ENCODE measurements at regions of chr3 and their contacts with region 1.

Region 1: GRCh38 chr3:157067114-157067513 is 92.8 kb downstream of the CCNL1 start:
- DNase-seq: peak in 2 of 3 donors; percentile 37 to 62
- H3K4me3 ChIP-seq: no peak overlapping the region
- H3K27ac ChIP-seq: no peak overlapping the region
- H3K4me1 ChIP-seq: peaks cover 0 to 2% (median 0%) of the 10 kb centered on the region in 4 experiments
- H3K27me3 ChIP-seq: no peaks in the 10 kb centered on the region

Region 2: DNA sequence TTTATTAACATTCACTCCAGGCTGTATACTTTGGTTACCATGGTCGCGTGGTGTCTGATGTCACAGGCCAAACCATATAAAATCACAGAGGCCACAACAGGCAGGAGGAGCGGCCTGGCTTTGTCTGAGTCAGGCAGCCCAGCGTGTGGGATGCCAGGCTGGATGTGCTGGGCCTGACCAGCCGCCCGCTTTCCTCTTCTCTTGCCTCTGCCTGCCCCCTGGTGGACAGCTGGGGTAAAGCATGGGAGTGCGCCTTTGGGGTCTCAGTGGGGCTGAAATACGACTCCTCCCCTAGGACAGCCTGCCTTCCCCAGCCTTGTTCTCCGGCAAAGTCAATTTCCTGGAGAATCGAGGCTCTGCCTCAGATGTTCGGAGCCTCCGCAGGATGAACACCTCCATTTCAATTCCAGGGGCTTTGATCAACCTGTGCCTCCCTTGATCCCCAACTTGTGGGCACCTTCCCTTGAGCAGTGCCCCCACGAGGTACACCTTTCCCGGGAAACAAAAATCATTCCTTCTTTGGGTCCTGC is 14.6 kb after region 1 on chr3:
- CTCF ChIA-PET with region 1: interaction called, 15 read pairs
- POLR2A ChIA-PET with region 1: no interaction called
- DNase-seq: peak; percentile 77 to 87 (median 85)
- H3K4me3 ChIP-seq: peak overlapping the region in 1 of 7 experiments; percentile 8
- H3K27ac ChIP-seq: no peak overlapping the region
- H3K4me1 ChIP-seq: peaks cover 0 to 4% (median 2%) of the 10 kb centered on the region in 4 experiments
- H3K27me3 ChIP-seq: no peaks in the 10 kb centered on the region

Region 3: DNA sequence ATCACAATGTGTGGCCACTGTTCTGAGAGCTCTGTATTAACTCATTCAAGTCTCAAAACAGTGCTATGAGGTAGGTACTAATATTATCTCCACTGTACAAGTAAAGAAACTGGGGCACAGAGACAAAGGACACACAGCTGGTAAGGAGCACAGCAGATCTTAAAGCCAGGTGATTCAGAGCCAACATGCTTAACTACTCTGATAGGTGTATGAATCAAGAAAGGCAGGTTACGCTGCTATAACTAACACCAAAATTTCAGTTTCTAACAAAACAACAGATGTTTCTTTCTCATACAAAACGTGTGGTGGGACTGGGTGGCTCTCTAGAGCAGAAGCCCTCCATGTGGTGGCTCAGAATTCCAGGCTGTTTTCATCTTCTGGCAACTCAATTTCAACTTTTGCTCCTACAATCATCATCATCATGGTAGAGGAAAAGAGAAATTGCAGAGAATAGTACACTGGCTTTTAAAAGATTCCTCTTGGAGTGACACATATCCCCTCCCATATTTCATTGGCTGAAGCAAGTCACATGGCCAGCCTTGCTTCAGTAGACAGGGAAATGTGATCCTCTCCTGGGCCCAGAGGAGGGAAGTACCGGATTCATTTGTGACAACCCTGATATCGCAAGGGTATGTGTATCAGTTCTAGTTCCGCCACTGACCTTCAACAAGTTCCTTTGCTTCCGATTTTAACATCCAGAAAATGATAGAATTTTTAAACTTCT is 243.4 kb after region 1 on chr3:
- CTCF ChIA-PET with region 1: no interaction called
- POLR2A ChIA-PET with region 1: no interaction called
- DNase-seq: no peak
- H3K4me3 ChIP-seq: no peak overlapping the region
- H3K27ac ChIP-seq: no peak overlapping the region
- H3K4me1 ChIP-seq: no peaks in the 10 kb centered on the region
- H3K27me3 ChIP-seq: no peaks in the 10 kb centered on the region

Measured in common myeloid progenitor, CD34-positive (primary cell).